OCI-LY7 (cell line): ENCODE measurements at regions of chr2 and their contacts with region 1.

Region 1: DNA sequence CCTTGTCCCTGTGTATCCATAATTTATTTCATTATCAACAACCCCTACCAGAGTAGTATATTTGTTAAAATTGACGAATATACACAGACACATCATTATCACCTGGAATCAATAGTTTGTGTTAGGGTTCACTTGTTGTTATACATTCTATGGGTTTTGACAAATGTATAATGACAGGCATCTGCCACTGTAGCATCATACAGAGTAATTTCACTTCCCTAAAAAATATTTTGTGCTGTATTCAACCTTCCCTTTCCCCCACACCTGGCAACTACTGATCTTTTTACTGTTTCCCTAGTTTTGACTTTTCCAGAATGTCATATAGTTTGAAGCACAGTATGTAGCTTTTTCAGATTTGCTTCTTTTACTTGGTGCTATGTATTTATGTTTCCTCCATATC is 132.0 kb downstream of the ZNF804A start:
- DNase-seq: peak; percentile 78
- H3K4me3 ChIP-seq: peak overlapping the region; percentile 26
- H3K27ac ChIP-seq: peak overlapping the region; percentile 79
- H3K4me1 ChIP-seq: peaks cover 82% of the 10 kb centered on the region
- CTCF ChIP-seq: no peak

Region 2: DNA sequence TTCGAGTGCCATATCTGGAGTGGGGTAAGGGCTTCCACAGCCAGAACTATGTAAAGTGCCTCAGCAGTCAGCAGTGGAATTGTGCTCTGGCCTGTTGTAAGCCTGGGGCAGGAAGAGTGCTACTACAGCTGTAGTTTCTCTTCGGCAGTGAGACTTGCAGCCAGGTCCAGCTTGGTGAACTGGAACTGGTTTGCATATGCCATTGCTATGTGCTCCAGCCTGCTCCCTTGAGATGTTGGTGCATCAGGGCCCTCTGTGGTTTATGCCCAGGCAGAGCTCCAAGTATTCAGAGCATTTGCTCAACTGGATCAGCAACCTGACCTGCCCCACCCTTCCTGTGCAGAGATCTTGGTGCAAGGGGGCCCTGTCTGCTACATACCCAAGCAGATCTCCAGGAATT is 84.1 kb before region 1 on chr2:
- CTCF ChIA-PET with region 1: no interaction called
- POLR2A ChIA-PET with region 1: no interaction called
- intact Hi-C with region 1: loop called (anchors 5 kb)
- DNase-seq: peak; percentile 78
- H3K4me3 ChIP-seq: peak overlapping the region; percentile 37
- H3K27ac ChIP-seq: peak overlapping the region; percentile 26
- H3K4me1 ChIP-seq: peaks cover 32% of the 10 kb centered on the region
- CTCF ChIP-seq: no peak